Endothelial cell of umbilical vein (primary cell): ENCODE measurements at regions of chr18 and their contacts with region 1.

Region 1: DNA sequence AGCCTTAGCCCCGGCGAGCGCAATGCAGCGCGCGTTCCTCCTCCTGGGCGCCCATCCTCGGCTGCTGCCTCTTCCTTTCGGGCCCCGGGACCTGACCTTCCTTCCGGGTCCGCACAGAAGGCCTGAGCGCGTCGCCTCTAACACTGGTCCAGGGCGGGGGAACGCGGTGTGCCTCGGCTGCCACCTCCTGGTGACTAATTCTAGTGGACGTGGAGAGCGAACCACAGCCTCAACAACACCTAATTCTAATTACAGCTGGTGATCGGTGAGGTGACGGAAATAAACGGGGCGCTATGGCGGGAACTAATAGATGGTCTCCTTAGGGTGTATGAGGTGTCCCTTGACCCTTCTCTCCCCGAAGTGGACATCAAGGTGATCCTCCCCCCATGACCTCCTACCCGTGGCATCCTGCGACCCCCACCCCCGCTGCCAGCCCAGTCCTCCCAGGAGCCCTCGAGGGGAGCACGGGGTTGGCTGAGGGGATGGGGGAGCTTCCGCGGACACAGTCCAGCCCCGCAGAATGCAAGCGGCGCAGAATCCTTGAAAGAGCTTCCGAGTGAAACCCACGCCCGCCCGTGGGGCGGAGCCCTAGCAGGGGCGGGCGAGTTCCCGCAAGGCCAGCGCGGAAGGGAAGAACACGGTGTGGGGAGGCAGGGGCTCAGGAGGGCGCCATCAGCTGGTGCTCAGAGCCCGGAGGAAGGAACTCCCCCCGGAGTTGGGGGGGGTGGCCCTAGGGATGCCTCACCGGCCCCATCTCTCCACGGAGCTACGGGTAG is 12.8 kb upstream of the HMSD start:
- DNase-seq: peak; percentile 67
- H3K4me3 ChIP-seq: peak overlapping the region; percentile 46 to 52 (median 51)
- H3K27ac ChIP-seq: no peak overlapping the region
- H3K4me1 ChIP-seq: peaks cover 8% of the 10 kb centered on the region
- H3K27me3 ChIP-seq: peaks cover 2 to 9% of the 10 kb centered on the region in 2 experiments
- CTCF ChIP-seq: peak; percentile 75 to 78
- POLR2A ChIP-seq: no peak

Region 2: GRCh38 chr18:63518178-63519012 is 417.9 kb before region 1 on chr18:
- CTCF ChIA-PET with region 1: interaction called, 112 read pairs
- POLR2A ChIA-PET with region 1: no interaction called
- dilution Hi-C with region 1: no loop called
- intact Hi-C with region 1: loop called (anchors 1 kb)
- DNase-seq: peak; percentile 59
- H3K4me3 ChIP-seq: no peak overlapping the region
- H3K27ac ChIP-seq: no peak overlapping the region
- H3K4me1 ChIP-seq: no peaks in the 10 kb centered on the region
- H3K27me3 ChIP-seq: peaks cover 9 to 20% of the 10 kb centered on the region in 2 experiments
- CTCF ChIP-seq: peak; percentile 56 to 68
- POLR2A ChIP-seq: no peak

Region 3: DNA sequence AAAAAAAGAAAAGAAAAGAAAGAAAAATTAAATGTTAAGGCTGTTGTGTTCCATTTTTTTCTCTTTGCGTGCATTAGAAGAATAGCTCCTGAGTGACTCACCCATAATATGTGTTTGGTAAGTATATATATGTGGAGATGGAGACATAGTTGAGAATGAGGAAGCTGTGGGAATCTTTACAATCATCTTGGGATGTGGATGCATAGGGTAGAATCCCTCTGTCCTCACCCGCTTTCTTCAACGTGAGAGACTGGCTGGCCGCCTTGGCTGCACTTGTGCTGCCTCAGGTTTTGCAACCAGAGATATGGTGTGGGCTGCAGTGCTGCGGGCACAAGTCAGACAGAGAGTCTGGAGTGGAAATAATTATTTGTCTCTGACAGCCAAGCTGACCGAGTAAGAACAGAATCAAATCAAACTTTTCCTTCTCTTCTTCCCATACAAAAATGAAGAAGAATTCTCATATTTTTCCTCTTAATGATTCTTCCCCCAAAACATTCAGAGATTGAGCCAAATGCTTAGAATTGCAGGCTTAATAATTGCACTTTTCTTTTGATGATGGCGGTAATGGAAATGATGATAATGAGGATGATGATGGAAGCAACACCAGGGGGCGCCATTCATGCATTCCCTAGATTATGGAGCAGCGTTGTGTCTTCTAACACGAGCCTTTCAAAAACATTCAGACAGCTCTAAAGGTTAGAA is 112.7 kb before region 1 on chr18:
- CTCF ChIA-PET with region 1: interaction called, 46 read pairs
- POLR2A ChIA-PET with region 1: interaction called, 5 read pairs
- dilution Hi-C with region 1: no loop called
- intact Hi-C with region 1: loop called (anchors 1 kb)
- DNase-seq: peak; percentile 12
- H3K4me3 ChIP-seq: no peak overlapping the region
- H3K27ac ChIP-seq: no peak overlapping the region
- H3K4me1 ChIP-seq: no peaks in the 10 kb centered on the region
- H3K27me3 ChIP-seq: peaks cover 2 to 10% of the 10 kb centered on the region in 2 experiments
- CTCF ChIP-seq: peak; percentile 29 to 34
- POLR2A ChIP-seq: no peak

Region 4: GRCh38 chr18:63858456-63858855 is 77.9 kb before region 1 on chr18:
- CTCF ChIA-PET with region 1: interaction called, 12 read pairs
- POLR2A ChIA-PET with region 1: no interaction called
- dilution Hi-C with region 1: no loop called
- intact Hi-C with region 1: no loop called
- DNase-seq: no peak
- H3K4me3 ChIP-seq: no peak overlapping the region
- H3K27ac ChIP-seq: no peak overlapping the region
- H3K4me1 ChIP-seq: no peaks in the 10 kb centered on the region
- H3K27me3 ChIP-seq: peaks cover 0 to 2% of the 10 kb centered on the region in 2 experiments
- CTCF ChIP-seq: no peak
- POLR2A ChIP-seq: no peak

Region 5: GRCh38 chr18:63908858-63909257 is 27.5 kb before region 1 on chr18:
- CTCF ChIA-PET with region 1: no interaction called
- POLR2A ChIA-PET with region 1: no interaction called
- dilution Hi-C with region 1: no loop called
- intact Hi-C with region 1: no loop called
- DNase-seq: no peak
- H3K4me3 ChIP-seq: no peak overlapping the region
- H3K27ac ChIP-seq: no peak overlapping the region
- H3K4me1 ChIP-seq: no peaks in the 10 kb centered on the region
- H3K27me3 ChIP-seq: peaks cover 0 to 8% of the 10 kb centered on the region in 2 experiments
- CTCF ChIP-seq: no peak
- POLR2A ChIP-seq: no peak

Region 6: GRCh38 chr18:63922049-63922448 is 14.3 kb before region 1 on chr18:
- CTCF ChIA-PET with region 1: interaction called, 14 read pairs
- POLR2A ChIA-PET with region 1: no interaction called
- dilution Hi-C with region 1: no loop called
- intact Hi-C with region 1: no loop called
- DNase-seq: no peak
- H3K4me3 ChIP-seq: no peak overlapping the region
- H3K27ac ChIP-seq: no peak overlapping the region
- H3K4me1 ChIP-seq: no peaks in the 10 kb centered on the region
- H3K27me3 ChIP-seq: peaks cover 6 to 37% of the 10 kb centered on the region in 2 experiments
- CTCF ChIP-seq: no peak
- POLR2A ChIP-seq: no peak

Region 7: DNA sequence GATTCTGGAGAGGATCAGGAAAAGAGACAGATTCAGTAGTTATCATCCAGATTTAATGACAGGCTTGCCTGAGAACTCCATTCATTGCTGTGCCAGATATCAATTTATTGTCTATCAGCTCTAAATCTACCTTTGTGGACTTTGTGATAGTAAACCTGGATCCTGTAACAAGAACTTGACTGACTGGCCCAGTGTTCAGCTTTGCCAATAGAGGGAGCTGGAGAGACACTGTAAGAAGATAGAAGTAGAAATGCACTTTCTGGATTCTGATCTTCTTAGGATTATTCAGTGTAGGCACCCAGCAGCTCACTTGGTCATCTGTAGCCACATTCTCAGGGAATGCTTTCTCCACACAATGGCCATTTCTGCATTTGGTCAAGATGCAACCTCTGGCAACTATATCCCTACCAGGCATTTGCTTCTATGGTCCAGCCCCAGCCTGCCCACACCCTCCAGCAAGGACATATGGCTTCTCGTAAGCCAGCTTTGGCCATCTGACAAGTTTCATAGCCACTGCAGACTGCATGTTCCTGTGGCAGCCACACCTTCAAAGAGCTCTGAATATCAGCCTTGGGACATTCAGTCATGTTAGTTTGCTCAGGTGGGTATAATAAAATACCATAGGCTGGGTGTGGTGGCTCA is 27.4 kb after region 1 on chr18:
- CTCF ChIA-PET with region 1: interaction called, 22 read pairs
- POLR2A ChIA-PET with region 1: no interaction called
- dilution Hi-C with region 1: no loop called
- intact Hi-C with region 1: no loop called
- DNase-seq: peak; percentile 57
- H3K4me3 ChIP-seq: no peak overlapping the region
- H3K27ac ChIP-seq: no peak overlapping the region
- H3K4me1 ChIP-seq: no peaks in the 10 kb centered on the region
- H3K27me3 ChIP-seq: peaks cover 14 to 28% of the 10 kb centered on the region in 2 experiments
- CTCF ChIP-seq: peak; percentile 68 to 82
- POLR2A ChIP-seq: no peak